AG04449 (cell line): ENCODE measurements at regions of chr9 and their contacts with region 1.

Region 1: DNA sequence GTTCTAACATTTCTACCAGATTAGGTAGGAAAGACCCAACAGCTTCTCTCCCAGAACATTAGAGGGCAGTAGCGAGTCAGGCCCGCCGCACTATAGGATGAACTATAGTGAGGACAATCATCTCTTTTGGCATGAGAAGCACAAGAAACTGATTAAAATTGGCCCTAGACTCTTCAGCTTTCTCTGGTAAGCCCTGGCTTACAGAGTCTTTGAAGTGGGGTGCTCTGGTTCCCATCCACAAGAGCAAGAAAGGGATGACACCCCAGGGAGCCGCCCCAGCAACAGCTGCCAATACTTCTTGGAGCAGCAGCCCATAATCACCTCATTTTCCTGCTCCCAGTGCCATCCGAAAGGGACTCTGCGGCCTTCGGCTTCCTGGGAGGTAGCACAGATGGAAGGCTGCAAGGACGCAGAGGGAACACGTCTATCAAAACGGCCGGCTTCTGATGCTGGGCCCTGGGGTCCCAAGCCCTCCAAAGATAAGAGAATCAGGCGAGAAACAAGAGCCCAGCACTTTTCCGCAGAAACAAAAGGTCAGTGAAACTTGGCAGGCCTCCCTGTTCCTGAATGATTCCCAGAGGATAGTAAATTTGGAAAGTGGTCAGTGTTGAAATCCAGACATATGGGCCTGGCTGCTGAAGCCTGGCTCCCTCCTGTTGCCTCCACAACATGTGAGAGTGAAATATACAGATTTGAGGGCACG is 69.3 kb downstream of the HSD17B3 start:
- DNase-seq: no peak
- H3K4me3 ChIP-seq: no peak overlapping the region
- CTCF ChIP-seq: peak; percentile 83

Region 2: DNA sequence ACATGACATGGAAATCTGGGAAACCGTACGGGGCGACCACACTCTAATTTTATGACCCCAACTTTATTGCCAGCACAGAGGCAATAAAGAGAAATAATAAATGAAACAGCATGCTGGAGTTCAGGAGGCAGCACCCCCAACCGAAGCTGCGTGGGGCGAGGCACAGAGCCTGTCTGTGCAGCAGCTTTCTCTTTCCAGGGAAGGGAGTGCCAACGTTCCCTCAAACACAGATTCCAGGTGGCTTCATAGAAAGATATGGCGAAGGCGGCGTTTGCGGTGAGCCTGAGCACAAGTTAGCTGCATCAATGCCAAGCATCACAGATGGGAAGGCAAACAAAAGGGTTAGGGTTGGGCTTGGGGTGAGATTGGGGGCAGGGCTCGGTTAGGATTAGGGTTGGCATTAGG is 45.5 kb before region 1 on chr9:
- CTCF ChIA-PET with region 1: no interaction called
- POLR2A ChIA-PET with region 1: no interaction called
- DNase-seq: no peak
- H3K4me3 ChIP-seq: no peak overlapping the region
- CTCF ChIP-seq: no peak

Region 3: DNA sequence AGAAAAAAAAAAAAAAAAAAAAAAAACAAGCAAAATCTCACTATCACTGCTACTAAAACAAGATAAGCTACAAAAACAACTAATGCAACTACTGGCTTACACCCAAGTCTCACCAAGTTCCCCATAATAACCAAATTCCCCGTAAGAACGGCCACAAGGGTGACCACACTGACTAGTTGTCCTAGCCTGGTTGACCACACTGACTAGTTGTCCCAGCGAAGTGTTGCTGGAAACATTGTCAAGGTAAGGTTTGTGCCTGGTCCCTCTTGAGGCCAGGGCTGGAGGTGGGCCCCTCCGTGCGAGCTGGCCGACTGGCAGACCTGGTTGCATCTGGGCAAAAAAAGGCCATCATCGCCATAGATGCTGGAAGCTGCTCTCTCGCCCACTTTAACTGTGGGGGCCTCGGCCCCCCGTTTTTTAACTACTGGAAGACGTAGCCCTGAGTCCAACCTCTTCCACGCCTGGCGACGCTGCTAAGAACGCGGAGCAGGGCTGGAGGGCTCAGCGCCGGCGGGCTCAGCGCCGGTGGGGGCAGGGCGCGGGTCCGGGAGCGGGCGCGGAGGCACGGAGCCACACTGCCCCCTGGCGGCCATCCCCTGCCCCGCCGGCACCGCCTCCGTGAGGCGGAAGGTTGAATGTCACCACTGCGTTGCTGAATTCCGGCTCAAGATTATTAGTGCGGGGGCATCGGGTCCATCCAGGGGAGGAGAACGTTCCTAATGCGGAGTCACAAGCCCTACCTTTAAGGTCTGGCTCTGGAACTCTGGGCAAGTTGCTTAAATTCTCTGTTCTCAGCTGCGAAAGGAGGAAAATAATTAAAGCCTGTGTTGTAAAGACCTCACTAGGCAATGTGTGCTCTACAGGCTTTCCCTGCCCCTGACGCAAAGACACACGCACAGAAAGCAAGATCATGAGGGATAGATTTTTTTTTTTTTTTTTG is 14.7 kb before region 1 on chr9:
- CTCF ChIA-PET with region 1: interaction called, 19 read pairs
- POLR2A ChIA-PET with region 1: no interaction called
- DNase-seq: no peak
- H3K4me3 ChIP-seq: peak overlapping the region; percentile 51
- CTCF ChIP-seq: peak; percentile 94

Region 4: GRCh38 chr9:96245399-96245798 is 12.7 kb after region 1 on chr9:
- CTCF ChIA-PET with region 1: interaction called, 50 read pairs
- POLR2A ChIA-PET with region 1: no interaction called
- DNase-seq: no peak
- H3K4me3 ChIP-seq: no peak overlapping the region
- CTCF ChIP-seq: no peak

Region 5: GRCh38 chr9:96663506-96664120 is 430.9 kb after region 1 on chr9:
- CTCF ChIA-PET with region 1: interaction called, 40 read pairs
- POLR2A ChIA-PET with region 1: no interaction called
- DNase-seq: no peak
- H3K4me3 ChIP-seq: no peak overlapping the region
- CTCF ChIP-seq: no peak